ENCODE measurements at regions of chr4 and their contacts with region 1.

Region 1: DNA sequence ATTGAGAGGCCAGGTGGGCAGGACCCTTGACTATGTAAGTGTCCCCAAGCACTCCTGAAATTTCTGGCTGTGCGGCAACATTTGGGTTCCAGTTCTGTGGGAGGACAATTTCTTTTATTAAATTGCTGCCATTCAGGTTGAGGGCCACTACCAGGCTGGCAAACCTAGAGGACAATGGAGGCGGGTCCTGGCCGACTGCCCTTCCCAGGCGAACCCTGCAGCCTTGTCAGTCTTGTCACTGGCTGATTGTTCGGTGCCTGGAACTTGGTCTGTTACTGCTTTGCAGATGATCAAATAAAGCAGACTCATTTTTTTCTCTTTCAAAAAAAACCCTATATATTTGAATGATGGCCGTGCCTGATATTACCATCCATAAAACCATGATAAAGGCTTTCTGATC is 6.6 kb upstream of the TMEM128 start:
- DNase-seq: no peak
- H3K4me3 ChIP-seq: no peak overlapping the region
- H3K27ac ChIP-seq: no peak overlapping the region
- H3K4me1 ChIP-seq: peaks cover 0 to 4% of the 10 kb centered on the region in 2 donors
- H3K27me3 ChIP-seq: no peaks in the 10 kb centered on the region
- CTCF ChIP-seq: no peak
- POLR2A ChIP-seq: no peak

Region 2: DNA sequence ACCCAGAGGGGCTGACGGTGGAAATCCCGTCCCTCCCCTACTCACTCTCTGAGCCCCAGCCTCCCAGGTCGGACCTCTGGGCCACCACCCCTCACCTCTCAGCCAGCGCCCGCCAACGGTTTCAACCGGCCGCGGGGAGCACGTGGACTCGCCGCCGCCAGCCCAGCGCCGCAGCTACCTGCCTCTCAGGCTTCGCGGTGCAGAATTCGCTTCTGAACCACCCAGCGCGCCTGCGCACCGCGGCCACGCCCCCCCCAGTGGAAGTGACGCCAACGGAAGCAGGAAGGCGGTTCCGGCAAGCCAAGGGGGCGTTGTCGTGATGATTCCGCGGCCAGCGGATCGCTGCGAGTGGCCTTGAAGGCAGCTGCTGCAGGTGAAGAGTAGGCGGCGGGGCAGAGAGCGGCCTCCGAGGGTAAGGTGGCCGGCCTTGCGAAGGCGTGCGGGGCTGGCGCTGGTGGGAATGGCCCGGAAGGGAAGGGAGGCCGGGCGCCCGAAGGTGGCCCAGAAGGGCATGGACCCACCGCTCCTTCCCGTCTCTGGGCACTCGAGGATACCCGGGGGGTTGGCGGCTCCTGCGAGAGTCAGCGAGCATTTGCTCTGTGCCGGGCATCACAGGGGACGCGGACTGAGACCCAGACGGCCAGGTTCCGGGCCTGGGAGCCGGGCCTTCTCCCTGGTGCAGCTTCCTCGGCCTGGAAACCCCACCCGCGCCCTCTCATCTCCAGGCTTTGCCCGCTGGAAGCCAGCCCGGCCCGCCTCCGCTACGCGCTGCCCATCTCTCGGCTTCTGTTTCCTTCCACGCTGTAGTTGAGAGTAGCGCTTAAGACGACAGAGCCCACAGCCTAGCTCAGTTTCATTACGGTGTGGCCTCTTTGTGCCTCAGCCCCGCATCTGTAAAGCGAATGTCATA is 35.5 kb after region 1 on chr4 and contains the starts of genes LYAR and ZBTB49:
- intact Hi-C with region 1: loop called in 1 of 2 experiments (anchors 5 kb)
- DNase-seq: peak; percentile 95 to 98 (median 97)
- H3K4me3 ChIP-seq: peak within 1 kb of the TSS; percentile 55 to 87 (median 62)
- H3K27ac ChIP-seq: peak within 1 kb of the TSS; percentile 68 to 91 (median 76)
- H3K4me1 ChIP-seq: peaks cover 15 to 23% of the 10 kb centered on the region in 2 donors
- H3K27me3 ChIP-seq: no peaks in the 10 kb centered on the region
- CTCF ChIP-seq: peak in 1 of 6 experiments; percentile 3
- POLR2A ChIP-seq: peak in 1 of 2 donors; percentile 71
- total RNA-seq, gene LYAR: 5.1 to 19.1 (median 8.0) TPM
- total RNA-seq, gene ZBTB49: 3.3 to 7.2 (median 5.6) TPM

Region 3: GRCh38 chr4:4302416-4302815 is 47.8 kb after region 1 on chr4:
- intact Hi-C with region 1: no loop called
- DNase-seq: peak in 1 of 7 donors; percentile 17
- H3K4me3 ChIP-seq: no peak overlapping the region
- H3K27ac ChIP-seq: no peak overlapping the region
- H3K4me1 ChIP-seq: no peaks in the 10 kb centered on the region
- H3K27me3 ChIP-seq: no peaks in the 10 kb centered on the region
- CTCF ChIP-seq: no peak
- POLR2A ChIP-seq: no peak

Region 4: GRCh38 chr4:4334798-4335520 is 80.3 kb after region 1 on chr4:
- intact Hi-C with region 1: loop called (anchors 5 kb)
- DNase-seq: peak; percentile 69 to 87 (median 71)
- H3K4me3 ChIP-seq: no peak overlapping the region
- H3K27ac ChIP-seq: no peak overlapping the region
- H3K4me1 ChIP-seq: peaks cover 0 to 3% of the 10 kb centered on the region in 2 donors
- H3K27me3 ChIP-seq: no peaks in the 10 kb centered on the region
- CTCF ChIP-seq: peak; percentile 51 to 83 (median 76)
- POLR2A ChIP-seq: no peak

Region 5: DNA sequence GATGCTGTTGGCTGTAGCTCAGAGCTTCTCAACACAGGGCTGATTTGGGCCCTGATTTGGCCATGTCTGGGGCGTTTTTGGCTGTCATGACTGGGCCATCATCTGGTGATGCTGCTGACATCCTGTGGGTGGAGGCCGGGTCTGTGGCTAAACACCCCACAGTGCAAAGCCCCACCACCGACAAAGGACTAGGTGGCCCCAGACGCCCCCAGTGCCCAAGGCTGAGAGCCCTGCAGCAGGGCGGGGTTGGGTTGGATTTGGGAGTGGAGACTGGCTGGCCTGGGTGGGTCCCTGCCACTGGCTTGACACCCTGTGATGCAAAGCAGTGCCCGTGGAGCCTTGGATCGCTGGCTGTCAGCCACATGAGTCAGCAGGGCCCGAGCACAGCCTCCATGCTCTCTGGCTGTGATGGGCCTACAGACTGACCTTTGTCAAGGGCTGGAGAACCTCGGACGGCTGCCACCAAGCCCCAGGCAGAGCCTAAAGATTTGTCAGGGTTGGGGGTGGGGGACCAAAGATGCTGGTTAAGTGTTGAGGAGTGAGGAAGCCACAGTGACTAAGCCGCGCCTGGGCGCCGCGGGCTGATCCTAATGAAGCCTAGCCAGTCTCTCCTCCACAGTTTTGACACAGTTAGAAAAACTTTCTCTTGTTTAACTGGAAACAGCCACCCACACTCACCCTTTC is 736.3 kb after region 1 on chr4:
- intact Hi-C with region 1: no loop called
- DNase-seq: peak; percentile 83 to 94 (median 90)
- H3K4me3 ChIP-seq: no peak overlapping the region
- H3K27ac ChIP-seq: peak overlapping the region in 1 of 5 donors; percentile 60
- H3K4me1 ChIP-seq: peaks cover 0 to 3% of the 10 kb centered on the region in 2 donors
- H3K27me3 ChIP-seq: no peaks in the 10 kb centered on the region
- CTCF ChIP-seq: no peak
- POLR2A ChIP-seq: no peak

Measured in adrenal gland (tissue), 19 donors.